Dorsolateral prefrontal cortex (tissue), 120 donors: ENCODE measurements at regions of chr4 and their contacts with region 1.

Region 1: DNA sequence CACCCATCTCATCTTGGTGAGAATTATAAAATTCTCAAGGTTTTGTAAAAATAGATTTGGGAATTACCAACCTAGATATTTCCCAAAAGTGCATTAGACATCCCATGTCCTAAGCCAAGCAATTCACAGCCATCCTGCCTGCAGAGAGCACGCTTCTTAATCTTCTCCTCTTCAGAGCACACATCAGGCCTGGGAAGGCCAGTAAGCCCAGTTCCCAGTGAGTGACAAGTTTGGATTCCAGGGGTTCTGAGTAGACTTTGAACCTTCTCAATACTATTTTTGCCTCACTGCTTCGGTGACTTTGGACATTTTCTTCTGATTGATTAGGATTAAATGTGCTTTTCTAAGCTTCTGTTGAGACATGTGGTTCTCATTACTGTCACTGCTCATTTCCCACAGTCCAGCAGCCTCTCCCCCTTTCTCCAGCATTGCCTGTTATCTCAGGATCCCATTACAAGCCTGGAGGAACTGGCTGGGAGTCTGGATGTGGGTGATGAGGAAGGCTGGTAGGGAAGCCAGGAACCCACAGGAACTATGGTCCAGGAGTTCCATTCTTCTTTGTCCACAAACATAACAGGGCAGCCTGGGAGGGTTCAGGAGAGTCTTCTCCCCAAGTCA is 56.4 kb upstream of the TMEM150C start:
- DNase-seq: no peak
- H3K4me3 ChIP-seq: no peak overlapping the region
- H3K27ac ChIP-seq: no peak overlapping the region
- H3K27me3 ChIP-seq: no peaks in the 10 kb centered on the region
- CTCF ChIP-seq: no peak

Region 2: GRCh38 chr4:81818385-81818920 is 799.8 kb before region 1 on chr4:
- intact Hi-C with region 1: no loop called
- DNase-seq: no peak
- H3K4me3 ChIP-seq: no peak overlapping the region
- H3K27ac ChIP-seq: no peak overlapping the region
- H3K27me3 ChIP-seq: no peaks in the 10 kb centered on the region
- CTCF ChIP-seq: no peak

Region 3: DNA sequence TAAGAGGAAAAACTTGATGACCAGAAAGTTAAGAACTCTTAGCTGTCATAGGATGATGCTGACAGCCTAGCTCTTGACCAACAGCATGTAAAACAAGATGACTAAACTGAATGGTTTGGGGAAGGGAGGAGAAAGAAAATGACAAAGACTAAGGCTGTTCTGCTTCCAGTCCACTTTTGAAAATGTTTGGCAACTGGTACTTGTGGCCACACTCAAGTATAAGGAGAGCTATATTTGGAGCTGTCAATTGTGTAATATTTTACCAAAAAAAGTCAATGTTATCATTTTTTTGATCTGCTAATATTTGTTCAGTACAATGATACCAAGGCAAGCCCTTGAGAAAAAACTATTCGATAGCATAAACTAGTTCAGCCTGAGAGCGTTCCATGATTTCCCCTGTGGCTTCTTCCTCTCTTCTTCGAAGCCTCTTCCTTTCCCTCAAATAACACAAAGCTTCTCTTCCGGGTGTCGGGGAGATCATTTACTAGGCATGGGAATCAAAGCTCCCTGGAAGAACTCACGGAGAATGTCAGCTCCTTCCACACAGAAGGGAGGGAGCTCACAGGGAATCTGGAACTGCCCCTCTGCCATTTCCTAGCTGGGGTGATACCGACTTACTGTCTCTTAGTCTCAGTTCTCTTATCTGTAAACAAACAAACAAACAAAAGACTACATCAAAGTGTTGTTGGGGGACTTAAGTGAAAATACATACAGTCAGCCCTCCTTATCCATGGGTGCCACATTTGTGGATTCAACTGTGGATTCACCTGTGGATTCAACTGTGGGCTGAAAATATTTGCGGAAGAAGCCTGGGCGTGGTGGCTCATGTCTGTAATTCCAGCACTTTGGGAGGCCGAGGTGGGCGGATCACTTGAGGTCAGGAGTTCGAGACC is 97.8 kb after region 1 on chr4:
- intact Hi-C with region 1: loop called in 1 of 2 experiments (anchors 5 kb)
- DNase-seq: no peak
- H3K4me3 ChIP-seq: no peak overlapping the region
- H3K27ac ChIP-seq: peak overlapping the region in 42 of 59 donors; percentile 1 to 84 (median 54)
- H3K27me3 ChIP-seq: no peaks in the 10 kb centered on the region
- CTCF ChIP-seq: no peak